WTC11 (cell line): ENCODE measurements at regions of chr7 and their contacts with region 1.

Region 1: GRCh38 chr7:44408596-44408995 is 81.9 kb downstream of the NUDCD3 start:
- DNase-seq: peak; percentile 48
- ATAC-seq: peak; percentile 97
- H3K4me3 Mint-ChIP-seq: peak overlapping the region; percentile 33
- H3K27ac Mint-ChIP-seq: peak overlapping the region; percentile 95
- H3K4me1 Mint-ChIP-seq: peaks cover 32% of the 10 kb centered on the region
- H3K27me3 Mint-ChIP-seq: no peaks in the 10 kb centered on the region
- CTCF ChIP-seq: no peak

Region 2: GRCh38 chr7:44460325-44460724 is 51.7 kb after region 1 on chr7:
- CTCF ChIA-PET with region 1: no interaction called
- POLR2A ChIA-PET with region 1: no interaction called
- DNase-seq: no peak
- ATAC-seq: no peak
- H3K4me3 Mint-ChIP-seq: no peak overlapping the region
- H3K27ac Mint-ChIP-seq: no peak overlapping the region
- H3K4me1 Mint-ChIP-seq: peaks cover 4% of the 10 kb centered on the region; the same call in 1 of the 2 replicates
- H3K27me3 Mint-ChIP-seq: no peaks in the 10 kb centered on the region
- CTCF ChIP-seq: no peak

Region 3: DNA sequence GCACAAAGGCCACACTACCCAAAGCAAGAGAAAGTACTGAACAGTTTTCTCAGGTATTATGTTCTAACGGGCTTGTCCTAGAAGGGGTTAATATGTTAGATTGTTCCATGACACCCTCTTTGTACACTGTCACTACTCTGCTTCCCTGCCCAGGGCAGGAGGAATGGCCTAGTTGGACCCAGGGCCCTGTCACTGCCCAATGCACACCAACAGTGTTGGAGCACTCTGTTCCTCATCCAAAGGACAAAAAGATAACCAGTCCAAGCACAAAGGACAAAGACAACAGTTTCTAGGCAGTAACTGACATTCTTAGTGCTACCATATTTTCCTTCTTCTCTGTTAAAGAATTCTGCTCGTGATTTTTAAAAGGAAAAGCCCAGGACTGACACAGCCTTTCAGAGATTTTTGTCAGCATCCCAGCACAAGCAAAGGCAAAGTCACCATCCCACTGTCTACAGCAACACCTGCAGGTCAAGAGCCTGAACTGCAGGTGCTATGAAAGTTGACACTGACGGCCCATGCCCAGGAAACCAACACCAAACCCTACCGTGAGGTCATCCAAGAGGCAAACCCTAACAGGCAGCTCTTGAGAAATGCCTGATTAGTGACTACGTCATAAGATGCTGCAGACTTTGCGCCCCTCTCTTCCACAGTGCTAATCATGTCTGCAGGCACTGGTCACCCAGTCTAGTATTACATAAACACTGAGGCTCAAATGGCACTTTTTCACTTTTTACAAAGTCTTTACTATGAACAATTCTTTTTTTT is 68.7 kb after region 1 on chr7:
- CTCF ChIA-PET with region 1: interaction called, 11 read pairs
- POLR2A ChIA-PET with region 1: no interaction called
- DNase-seq: peak; percentile 75
- ATAC-seq: peak; percentile 100
- H3K4me3 Mint-ChIP-seq: no peak overlapping the region
- H3K27ac Mint-ChIP-seq: peak overlapping the region; percentile 19; the same call in 1 of the 2 replicates
- H3K4me1 Mint-ChIP-seq: no peaks in the 10 kb centered on the region
- H3K27me3 Mint-ChIP-seq: no peaks in the 10 kb centered on the region; the same call in 1 of the 2 replicates
- CTCF ChIP-seq: peak; percentile 89